WTC11 (cell line): ENCODE measurements at regions of chr20 and their contacts with region 1.

Region 1: GRCh38 chr20:17226410-17227218 is at the start of gene PCSK2:
- DNase-seq: peak; percentile 90
- ATAC-seq: peak; percentile 88
- H3K4me3 Mint-ChIP-seq: peak within 1 kb of the TSS; percentile 83
- H3K27ac Mint-ChIP-seq: no peak within 1 kb of the TSS
- H3K4me1 Mint-ChIP-seq: peaks cover 31% of the 10 kb centered on the region
- H3K27me3 Mint-ChIP-seq: peaks cover 77% of the 10 kb centered on the region
- CTCF ChIP-seq: no peak
- total RNA-seq, gene PCSK2: 0.74 to 1.1 TPM (median 0.98 TPM) in 3 replicates

Region 2: GRCh38 chr20:17442588-17442987 is 216.0 kb after region 1 on chr20:
- CTCF ChIA-PET with region 1: interaction called, 12 read pairs
- POLR2A ChIA-PET with region 1: no interaction called
- DNase-seq: peak; percentile 38
- ATAC-seq: peak; percentile 70
- H3K4me3 Mint-ChIP-seq: no peak overlapping the region
- H3K27ac Mint-ChIP-seq: no peak overlapping the region
- H3K4me1 Mint-ChIP-seq: no peaks in the 10 kb centered on the region
- H3K27me3 Mint-ChIP-seq: no peaks in the 10 kb centered on the region
- CTCF ChIP-seq: peak; percentile 37; the same call in 1 of the 2 replicates